HEK293 (cell line): ENCODE measurements at regions of chr19 and their contacts with region 1.

Region 1: DNA sequence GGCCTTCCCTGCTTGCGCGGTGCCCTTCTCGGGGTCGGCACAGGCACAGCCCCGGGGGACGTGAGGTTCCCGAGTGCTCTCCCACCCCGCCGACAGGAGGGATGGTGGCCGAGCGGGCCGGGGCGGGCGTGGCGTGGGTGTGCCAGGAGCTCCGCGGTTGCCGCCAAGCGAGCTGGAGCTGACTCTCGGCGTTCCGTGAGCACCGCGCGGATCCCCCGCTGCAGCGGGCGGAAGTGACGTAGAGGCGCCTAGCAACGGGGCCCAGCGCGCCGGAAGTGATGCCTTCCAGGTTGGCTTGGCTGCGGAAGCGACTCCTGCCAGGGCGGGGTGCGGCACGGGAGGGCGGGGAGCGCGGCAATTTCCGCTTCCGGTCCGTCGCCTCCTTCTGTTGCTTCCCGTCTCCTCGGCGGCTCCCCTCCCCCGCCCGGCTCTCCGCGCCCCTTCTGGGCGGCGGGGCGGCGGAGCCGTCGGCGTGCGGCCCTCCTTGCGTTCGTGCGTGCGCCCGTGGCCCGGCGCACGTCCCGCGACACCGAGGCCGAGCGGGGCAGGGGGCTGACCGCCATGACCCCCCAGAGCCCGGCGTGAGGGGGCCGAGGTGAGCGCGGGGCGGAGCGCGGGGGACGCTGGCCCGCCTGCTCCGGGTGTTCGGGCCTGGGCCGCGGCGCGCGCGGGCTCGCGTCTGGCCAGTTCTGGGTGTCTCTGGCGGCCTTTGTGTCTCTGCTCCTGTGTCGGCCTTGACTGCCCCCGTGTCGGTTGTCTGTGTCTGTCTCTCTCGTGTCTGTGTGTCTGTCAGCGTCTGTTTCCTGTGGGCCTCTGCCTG is at the start of gene EPN1:
- H3K4me3 ChIP-seq: peak within 1 kb of the TSS; percentile 99
- H3K27ac ChIP-seq: peak within 1 kb of the TSS; percentile 82
- H3K4me1 ChIP-seq: peaks cover 19% of the 10 kb centered on the region
- CTCF ChIP-seq: no peak

Region 2: DNA sequence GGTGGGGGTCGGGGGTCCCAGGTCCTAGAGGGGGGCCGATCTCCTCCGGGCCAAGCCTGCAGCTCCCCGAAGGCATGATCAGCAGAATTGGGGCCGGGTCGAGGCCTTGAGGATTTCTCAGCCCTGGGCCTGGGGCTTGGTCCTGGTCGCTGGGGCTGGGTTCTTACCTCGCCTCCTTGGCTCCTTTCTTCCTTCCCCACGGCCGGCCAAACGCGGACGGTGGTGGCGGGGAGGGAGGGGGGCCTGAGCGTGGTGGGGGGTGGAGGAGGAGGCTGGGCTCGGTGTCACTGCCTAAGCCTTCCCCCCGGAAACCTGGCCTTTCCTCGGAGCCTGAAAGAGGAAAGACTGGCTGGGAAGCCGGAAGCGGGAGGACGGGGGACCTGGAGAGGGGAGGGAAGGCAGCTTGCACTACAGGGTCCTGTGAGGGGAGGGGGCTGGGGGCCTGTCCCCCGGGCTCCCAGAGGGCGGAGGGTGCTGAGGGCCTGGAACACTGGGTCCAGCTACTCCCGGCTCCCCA is 94.4 kb before region 1 on chr19 and contains the start of gene ZNF579:
- CTCF ChIA-PET with region 1: no interaction called
- POLR2A ChIA-PET with region 1: no interaction called
- H3K4me3 ChIP-seq: peak within 1 kb of the TSS; percentile 100
- H3K27ac ChIP-seq: peak within 1 kb of the TSS; percentile 80
- H3K4me1 ChIP-seq: 0 out of 2 replicates have a peak, but pooled peaks cover 4% of the 10 kb centered on the region
- CTCF ChIP-seq: no peak

Region 3: GRCh38 chr19:55661004-55661403 is 14.0 kb before region 1 on chr19:
- CTCF ChIA-PET with region 1: interaction called, 36 read pairs
- POLR2A ChIA-PET with region 1: interaction called, 16 read pairs
- H3K4me3 ChIP-seq: no peak overlapping the region
- H3K27ac ChIP-seq: no peak overlapping the region
- H3K4me1 ChIP-seq: peaks cover 11% of the 10 kb centered on the region
- CTCF ChIP-seq: no peak